ENCODE measurements at regions of chr3 and their contacts with region 1.

Region 1: DNA sequence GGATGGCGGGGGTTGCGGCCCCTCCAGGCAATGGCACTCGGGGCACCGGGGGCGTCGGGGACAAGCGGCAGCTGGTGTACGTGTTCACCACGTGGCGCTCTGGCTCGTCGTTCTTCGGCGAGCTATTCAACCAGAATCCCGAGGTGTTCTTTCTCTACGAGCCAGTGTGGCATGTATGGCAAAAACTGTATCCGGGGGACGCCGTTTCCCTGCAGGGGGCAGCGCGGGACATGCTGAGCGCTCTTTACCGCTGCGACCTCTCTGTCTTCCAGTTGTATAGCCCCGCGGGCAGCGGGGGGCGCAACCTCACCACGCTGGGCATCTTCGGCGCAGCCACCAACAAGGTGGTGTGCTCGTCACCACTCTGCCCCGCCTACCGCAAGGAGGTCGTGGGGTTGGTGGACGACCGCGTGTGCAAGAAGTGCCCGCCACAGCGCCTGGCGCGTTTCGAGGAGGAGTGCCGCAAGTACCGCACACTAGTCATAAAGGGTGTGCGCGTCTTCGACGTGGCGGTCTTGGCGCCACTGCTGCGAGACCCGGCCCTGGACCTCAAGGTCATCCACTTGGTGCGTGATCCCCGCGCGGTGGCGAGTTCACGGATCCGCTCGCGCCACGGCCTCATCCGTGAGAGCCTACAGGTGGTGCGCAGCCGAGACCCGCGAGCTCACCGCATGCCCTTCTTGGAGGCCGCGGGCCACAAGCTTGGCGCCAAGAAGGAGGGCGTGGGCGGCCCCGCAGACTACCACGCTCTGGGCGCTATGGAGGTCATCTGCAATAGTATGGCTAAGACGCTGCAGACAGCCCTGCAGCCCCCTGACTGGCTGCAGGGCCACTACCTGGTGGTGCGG is 1.9 kb downstream of the CHST2 start:
- DNase-seq: peak; percentile 44
- ATAC-seq: no peak
- H3K4me3 ChIP-seq: peak overlapping the region; percentile 97
- H3K27ac ChIP-seq: no peak overlapping the region
- H3K4me1 ChIP-seq: peaks cover 11% of the 10 kb centered on the region
- H3K27me3 ChIP-seq: no peaks in the 10 kb centered on the region
- CTCF ChIP-seq: peak; percentile 56

Region 2: DNA sequence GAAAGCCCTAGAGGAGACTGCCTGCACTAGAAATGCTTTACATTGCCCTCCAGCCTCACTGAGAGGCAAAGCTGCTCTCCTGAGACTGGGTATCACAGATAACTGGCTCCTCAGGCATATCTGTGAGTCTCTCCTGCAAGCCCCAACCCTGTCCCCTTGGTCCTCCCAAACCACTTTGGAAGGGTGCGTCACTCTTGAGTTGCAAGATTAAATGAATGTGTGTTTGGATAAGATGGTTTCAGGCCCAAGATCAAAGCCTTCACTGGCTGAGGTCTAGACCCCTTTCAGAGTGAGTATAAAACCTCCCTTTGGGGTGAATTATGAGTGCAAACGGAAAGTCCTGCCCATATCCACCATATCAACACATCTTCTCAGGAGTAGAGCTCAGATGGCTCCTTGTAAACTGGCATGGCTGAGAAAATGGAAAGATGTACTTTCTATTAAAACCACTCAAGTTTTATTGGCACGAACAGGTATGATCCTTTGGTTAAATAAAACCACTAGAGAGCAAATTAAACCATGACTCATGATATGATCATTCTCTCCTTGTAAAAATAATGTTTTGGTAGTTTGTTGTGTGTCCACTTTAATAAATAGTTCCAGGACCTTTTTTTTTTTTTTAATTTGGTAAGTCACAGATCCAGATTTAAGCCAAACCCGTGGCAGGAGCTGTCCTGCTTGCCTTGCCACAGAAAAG is 162.1 kb after region 1 on chr3:
- CTCF ChIA-PET with region 1: no interaction called
- POLR2A ChIA-PET with region 1: no interaction called
- intact Hi-C with region 1: loop called (anchors 5 kb)
- DNase-seq: peak; percentile 89
- ATAC-seq: peak; percentile 91
- H3K4me3 ChIP-seq: no peak overlapping the region
- H3K27ac ChIP-seq: peak overlapping the region; percentile 67
- H3K4me1 ChIP-seq: peaks cover 16% of the 10 kb centered on the region
- H3K27me3 ChIP-seq: no peaks in the 10 kb centered on the region
- CTCF ChIP-seq: no peak

Region 3: GRCh38 chr3:143329567-143330211 is 208.2 kb after region 1 on chr3:
- CTCF ChIA-PET with region 1: no interaction called
- POLR2A ChIA-PET with region 1: no interaction called
- intact Hi-C with region 1: loop called (anchors 5 kb)
- DNase-seq: no peak
- ATAC-seq: no peak
- H3K4me3 ChIP-seq: no peak overlapping the region
- H3K27ac ChIP-seq: no peak overlapping the region
- H3K4me1 ChIP-seq: peaks cover 33% of the 10 kb centered on the region
- H3K27me3 ChIP-seq: no peaks in the 10 kb centered on the region
- CTCF ChIP-seq: no peak

Region 4: GRCh38 chr3:143507735-143508580 is 386.5 kb after region 1 on chr3:
- CTCF ChIA-PET with region 1: no interaction called
- POLR2A ChIA-PET with region 1: no interaction called
- intact Hi-C with region 1: loop called (anchors 10 kb)
- DNase-seq: peak; percentile 43
- ATAC-seq: peak; percentile 55
- H3K4me3 ChIP-seq: no peak overlapping the region
- H3K27ac ChIP-seq: no peak overlapping the region
- H3K4me1 ChIP-seq: no peaks in the 10 kb centered on the region; the same call in 1 of the 2 replicates
- H3K27me3 ChIP-seq: no peaks in the 10 kb centered on the region
- CTCF ChIP-seq: no peak

Region 5: GRCh38 chr3:143763564-143764162 is 642.2 kb after region 1 on chr3:
- CTCF ChIA-PET with region 1: no interaction called
- POLR2A ChIA-PET with region 1: no interaction called
- intact Hi-C with region 1: loop called (anchors 10 kb)
- DNase-seq: peak; percentile 14
- ATAC-seq: no peak
- H3K4me3 ChIP-seq: no peak overlapping the region
- H3K27ac ChIP-seq: no peak overlapping the region
- H3K4me1 ChIP-seq: no peaks in the 10 kb centered on the region
- H3K27me3 ChIP-seq: no peaks in the 10 kb centered on the region
- CTCF ChIP-seq: peak; percentile 63